HCT116 (cell line): ENCODE measurements at regions of chr12 and their contacts with region 1.

Region 1: DNA sequence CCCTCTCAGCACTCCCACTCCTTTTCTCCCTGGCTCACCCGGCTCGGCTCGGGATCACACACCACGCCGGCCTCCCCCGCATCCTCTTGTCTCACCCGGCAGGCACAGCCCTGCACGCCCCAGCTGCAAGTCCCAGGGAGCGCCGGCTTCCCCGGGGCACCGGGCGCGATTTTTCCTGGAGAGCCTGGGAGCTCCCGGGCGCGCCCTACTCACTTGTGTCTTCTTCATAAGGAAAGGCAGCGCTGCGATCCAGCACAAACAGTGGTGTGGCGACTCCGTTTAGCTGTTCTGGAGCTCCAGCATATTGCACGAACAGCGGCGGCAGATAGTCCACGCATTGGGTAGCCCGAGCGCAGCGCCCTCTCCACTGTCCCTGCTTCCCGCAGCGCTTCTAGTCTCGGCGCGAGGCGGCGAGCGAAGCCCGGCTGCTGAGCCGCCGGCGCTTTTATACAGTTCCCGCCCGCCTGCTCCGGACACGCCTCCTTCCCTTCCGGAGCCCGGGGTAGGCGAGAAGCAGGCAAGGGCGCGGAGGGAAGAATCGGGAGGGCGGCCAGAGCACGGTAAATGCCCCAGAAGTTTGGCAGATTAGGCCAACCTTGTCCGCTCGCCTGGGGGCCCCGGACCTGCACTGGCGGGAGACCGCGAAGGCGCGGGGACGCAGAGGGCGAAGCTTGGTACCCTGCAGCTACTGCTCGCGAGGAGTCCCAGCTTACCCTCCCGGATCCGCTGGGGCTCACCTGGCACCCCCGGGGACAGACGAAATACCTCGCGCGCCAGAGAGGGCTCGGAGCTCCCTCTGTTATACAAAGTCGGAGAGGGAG is at the start of gene KITLG:
- DNase-seq: peak; percentile 76
- ATAC-seq: peak; percentile 80
- H3K4me3 ChIP-seq: peak within 1 kb of the TSS; percentile 86 to 97
- H3K27ac ChIP-seq: peak within 1 kb of the TSS; percentile 93
- H3K4me1 ChIP-seq: peaks cover 28 to 58% of the 10 kb centered on the region in 2 experiments
- H3K27me3 ChIP-seq: no peaks in the 10 kb centered on the region
- CTCF ChIP-seq: peak in 2 of 3 experiments; percentile 11 to 24; a peak in 3 of 6 replicates
- POLR2A ChIP-seq: peak; percentile 97
- RAD21 ChIP-seq: peak; percentile 62
- total RNA-seq, gene KITLG: 570 TPM

Region 2: DNA sequence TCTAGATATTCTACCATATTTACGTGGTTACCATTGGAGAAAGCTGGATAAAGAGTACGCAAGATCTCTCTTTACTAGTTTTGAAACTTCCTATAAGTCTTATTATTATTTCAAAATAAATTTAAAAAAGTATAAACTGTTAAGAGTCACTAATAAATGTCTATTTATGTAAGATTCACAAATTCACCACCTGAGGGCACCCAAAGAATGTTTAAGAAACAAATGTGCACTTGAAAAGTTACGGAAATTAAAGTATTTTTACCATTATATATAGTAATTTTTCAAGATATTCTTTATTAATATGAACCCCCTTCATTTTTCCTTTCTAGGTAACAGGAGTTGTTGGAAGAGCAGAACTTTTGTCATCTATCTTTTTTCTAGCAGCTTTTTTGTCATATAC is 426.3 kb before region 1 on chr12:
- CTCF ChIA-PET with region 1: no interaction called
- POLR2A ChIA-PET with region 1: no interaction called
- RAD21 ChIA-PET with region 1: no interaction called
- intact Hi-C with region 1: loop called (anchors 5 kb)
- DNase-seq: peak; percentile 37
- ATAC-seq: no peak
- H3K4me3 ChIP-seq: no peak overlapping the region
- H3K27ac ChIP-seq: no peak overlapping the region
- H3K4me1 ChIP-seq: no peaks in the 10 kb centered on the region
- H3K27me3 ChIP-seq: no peaks in the 10 kb centered on the region
- CTCF ChIP-seq: peak in 2 of 3 experiments; percentile 27 to 45; a peak in 2 of 6 replicates
- POLR2A ChIP-seq: no peak
- RAD21 ChIP-seq: peak; percentile 75

Region 3: DNA sequence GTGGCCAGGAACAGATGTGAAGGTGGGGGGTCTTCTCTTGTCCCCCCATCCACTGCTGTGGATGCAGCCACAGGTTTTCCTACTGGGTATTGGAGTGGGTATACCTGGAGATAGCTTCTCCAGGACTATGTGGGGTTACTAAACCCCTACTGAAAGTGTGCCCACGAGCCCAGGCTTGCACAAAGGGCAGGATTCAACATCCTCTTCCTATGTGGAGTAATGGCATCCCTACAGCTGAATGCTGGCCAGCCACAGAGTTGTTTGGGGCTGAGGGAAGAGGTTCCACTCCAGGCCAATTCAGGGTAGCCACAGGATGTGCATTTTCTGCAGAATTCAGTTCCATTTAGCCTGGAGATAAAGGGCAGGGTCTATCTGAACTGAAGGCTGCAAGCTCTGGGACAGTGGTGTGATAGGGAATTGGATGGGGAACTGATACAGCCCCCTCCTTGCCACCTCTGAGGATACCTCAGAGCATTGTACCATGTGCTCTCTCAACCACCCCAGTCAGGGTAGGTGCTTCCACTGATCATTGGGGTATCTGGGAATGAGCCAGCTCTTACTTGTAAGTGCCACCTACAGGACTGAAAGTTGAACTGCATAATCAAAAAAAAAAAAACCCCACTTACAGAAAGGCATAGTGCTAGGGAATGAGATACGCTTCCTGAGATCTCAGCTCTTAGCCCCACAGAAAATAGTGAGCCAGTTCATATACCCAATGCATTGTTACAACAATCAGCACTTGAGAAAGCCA is 187.1 kb before region 1 on chr12:
- CTCF ChIA-PET with region 1: no interaction called
- POLR2A ChIA-PET with region 1: no interaction called
- RAD21 ChIA-PET with region 1: no interaction called
- intact Hi-C with region 1: no loop called
- DNase-seq: peak; percentile 27
- ATAC-seq: peak; percentile 74
- H3K4me3 ChIP-seq: no peak overlapping the region
- H3K27ac ChIP-seq: no peak overlapping the region
- H3K4me1 ChIP-seq: 0 out of 4 replicates have a peak, but pooled peaks cover 0 to 3% of the 10 kb centered on the region in 2 experiments
- H3K27me3 ChIP-seq: no peaks in the 10 kb centered on the region
- CTCF ChIP-seq: peak; percentile 15 to 58 (median 57); a peak in 5 of 6 replicates
- POLR2A ChIP-seq: no peak
- RAD21 ChIP-seq: peak; percentile 63

Region 4: GRCh38 chr12:88570103-88570502 is 10.2 kb before region 1 on chr12:
- CTCF ChIA-PET with region 1: interaction called, 5 read pairs
- POLR2A ChIA-PET with region 1: interaction called, 12 read pairs
- RAD21 ChIA-PET with region 1: no interaction called
- intact Hi-C with region 1: no loop called
- DNase-seq: no peak
- ATAC-seq: no peak
- H3K4me3 ChIP-seq: no peak overlapping the region
- H3K27ac ChIP-seq: peak overlapping the region; percentile 34; the same call in 1 of the 2 replicates
- H3K4me1 ChIP-seq: peaks cover 66 to 97% of the 10 kb centered on the region in 2 experiments
- H3K27me3 ChIP-seq: no peaks in the 10 kb centered on the region
- CTCF ChIP-seq: no peak
- POLR2A ChIP-seq: no peak
- RAD21 ChIP-seq: no peak

Region 5: DNA sequence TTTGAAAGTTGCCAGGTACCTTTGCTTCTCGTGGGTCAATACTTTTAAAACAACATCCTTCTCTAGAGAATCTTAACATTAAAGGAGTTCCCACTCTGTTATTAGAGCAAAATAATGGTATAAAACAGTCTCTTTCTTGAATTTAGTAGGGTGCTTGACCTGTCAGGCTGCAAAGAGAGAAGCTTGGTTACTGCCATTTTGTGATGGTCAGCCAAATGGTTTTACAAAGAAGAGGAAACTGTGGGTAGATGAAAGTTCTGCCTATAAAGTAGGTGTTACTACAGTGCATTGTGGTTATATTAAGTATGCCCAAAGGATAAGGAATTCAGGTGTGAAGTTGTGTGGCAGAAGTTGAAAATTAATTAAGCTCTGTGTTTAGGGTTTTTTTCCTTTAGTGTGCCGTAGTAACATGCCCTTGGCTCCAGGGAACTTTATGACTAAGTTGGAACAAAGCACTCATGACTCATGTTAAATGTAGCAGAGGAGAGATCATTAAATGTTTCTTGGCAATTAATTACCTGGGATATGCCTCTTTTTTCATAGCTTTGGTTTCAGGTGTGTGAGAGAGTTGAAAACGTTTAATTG is 354.0 kb after region 1 on chr12:
- CTCF ChIA-PET with region 1: interaction called, 3 read pairs
- POLR2A ChIA-PET with region 1: interaction called, 53 read pairs
- RAD21 ChIA-PET with region 1: no interaction called
- intact Hi-C with region 1: loop called (anchors 5 kb)
- DNase-seq: peak; percentile 98
- ATAC-seq: peak; percentile 73
- H3K4me3 ChIP-seq: no peak overlapping the region
- H3K27ac ChIP-seq: peak overlapping the region; percentile 98
- H3K4me1 ChIP-seq: peaks cover 78 to 90% of the 10 kb centered on the region in 2 experiments
- H3K27me3 ChIP-seq: no peaks in the 10 kb centered on the region
- CTCF ChIP-seq: no peak
- POLR2A ChIP-seq: no peak
- RAD21 ChIP-seq: peak; percentile 52

Region 6: GRCh38 chr12:88946372-88946997 is 366.2 kb after region 1 on chr12:
- CTCF ChIA-PET with region 1: interaction called, 3 read pairs
- POLR2A ChIA-PET with region 1: interaction called, 16 read pairs
- RAD21 ChIA-PET with region 1: no interaction called
- intact Hi-C with region 1: no loop called
- DNase-seq: peak; percentile 64
- ATAC-seq: peak; percentile 73
- H3K4me3 ChIP-seq: no peak overlapping the region
- H3K27ac ChIP-seq: peak overlapping the region; percentile 87
- H3K4me1 ChIP-seq: peaks cover 84 to 88% of the 10 kb centered on the region in 2 experiments
- H3K27me3 ChIP-seq: no peaks in the 10 kb centered on the region
- CTCF ChIP-seq: peak in 2 of 3 experiments; percentile 42 to 50; a peak in 4 of 6 replicates
- POLR2A ChIP-seq: no peak
- RAD21 ChIP-seq: no peak

Region 7: DNA sequence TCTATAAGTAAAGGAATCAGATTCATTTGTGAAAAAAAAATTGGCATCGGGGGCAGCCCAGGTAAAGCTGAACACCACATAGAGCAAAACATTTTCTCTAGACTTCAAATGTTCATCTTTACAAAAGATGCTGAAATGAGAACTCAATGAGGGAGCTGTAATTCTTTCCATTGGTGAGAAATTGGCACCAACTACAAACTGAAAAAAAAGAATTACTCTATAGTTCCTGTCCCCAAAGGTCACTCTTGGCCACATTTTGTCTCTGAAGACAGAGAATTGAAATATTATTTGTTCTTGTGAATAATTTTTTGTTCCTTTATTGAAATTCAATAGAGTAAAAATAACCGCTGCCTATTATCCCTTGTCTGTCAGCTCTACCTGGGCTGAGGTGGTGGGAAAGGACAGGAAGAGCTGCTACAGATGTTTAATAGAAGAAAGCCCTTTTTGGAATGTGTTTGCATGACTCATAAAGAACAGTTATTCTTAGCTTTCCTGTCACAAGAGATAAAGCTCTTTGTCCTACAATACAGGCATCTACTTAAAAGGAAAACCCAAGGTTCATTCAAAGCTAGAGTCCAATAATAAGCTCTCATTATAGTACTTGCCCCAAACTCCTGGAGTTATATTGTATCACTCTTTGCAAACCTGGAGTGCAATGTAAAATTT is 380.1 kb after region 1 on chr12:
- CTCF ChIA-PET with region 1: no interaction called
- POLR2A ChIA-PET with region 1: interaction called, 10 read pairs
- RAD21 ChIA-PET with region 1: no interaction called
- intact Hi-C with region 1: loop called (anchors 10 kb)
- DNase-seq: peak; percentile 91
- ATAC-seq: peak; percentile 85
- H3K4me3 ChIP-seq: peak overlapping the region in 1 of 2 experiments; percentile 8; a peak in 1 of 4 replicates
- H3K27ac ChIP-seq: peak overlapping the region; percentile 97
- H3K4me1 ChIP-seq: peaks cover 69 to 87% of the 10 kb centered on the region in 2 experiments
- H3K27me3 ChIP-seq: no peaks in the 10 kb centered on the region
- CTCF ChIP-seq: no peak
- POLR2A ChIP-seq: no peak
- RAD21 ChIP-seq: peak; percentile 29; the same call in 1 of the 2 replicates

Region 8: GRCh38 chr12:88993651-88994050 is 413.4 kb after region 1 on chr12:
- CTCF ChIA-PET with region 1: interaction called, 3 read pairs
- POLR2A ChIA-PET with region 1: interaction called, 9 read pairs
- RAD21 ChIA-PET with region 1: interaction called in 1 of 2 experiments, 3 read pairs
- intact Hi-C with region 1: loop called (anchors 1 kb)
- DNase-seq: peak; percentile 63
- ATAC-seq: peak; percentile 78
- H3K4me3 ChIP-seq: no peak overlapping the region
- H3K27ac ChIP-seq: peak overlapping the region; percentile 62
- H3K4me1 ChIP-seq: peaks cover 16 to 45% of the 10 kb centered on the region in 2 experiments; a peak in 3 of 4 replicates
- H3K27me3 ChIP-seq: no peaks in the 10 kb centered on the region
- CTCF ChIP-seq: peak; percentile 30 to 68 (median 52); a peak in 4 of 6 replicates
- POLR2A ChIP-seq: no peak
- RAD21 ChIP-seq: peak; percentile 91

Region 9: GRCh38 chr12:89179983-89180382 is 599.7 kb after region 1 on chr12:
- CTCF ChIA-PET with region 1: no interaction called
- POLR2A ChIA-PET with region 1: no interaction called
- RAD21 ChIA-PET with region 1: no interaction called
- intact Hi-C with region 1: no loop called
- DNase-seq: no peak
- ATAC-seq: no peak
- H3K4me3 ChIP-seq: no peak overlapping the region
- H3K27ac ChIP-seq: no peak overlapping the region
- H3K4me1 ChIP-seq: peaks cover 3 to 12% of the 10 kb centered on the region in 2 experiments; a peak in 2 of 4 replicates
- H3K27me3 ChIP-seq: no peaks in the 10 kb centered on the region
- CTCF ChIP-seq: no peak
- POLR2A ChIP-seq: no peak
- RAD21 ChIP-seq: no peak